ENCODE measurements at regions of chr15 and their contacts with region 1.

Region 1: GRCh38 chr15:50182219-50183013 is 420 bp downstream of the SLC27A2 start:
- DNase-seq: peak; percentile 65
- H3K4me3 Mint-ChIP-seq: peak overlapping the region; percentile 96
- H3K27ac Mint-ChIP-seq: peak overlapping the region; percentile 85
- H3K4me1 Mint-ChIP-seq: peaks cover 53% of the 10 kb centered on the region
- H3K27me3 Mint-ChIP-seq: no peaks in the 10 kb centered on the region

Region 2: GRCh38 chr15:50241684-50242450 is 59.5 kb after region 1 on chr15:
- CTCF ChIA-PET with region 1: no interaction called
- POLR2A ChIA-PET with region 1: interaction called, 28 read pairs
- DNase-seq: peak; percentile 23
- H3K4me3 Mint-ChIP-seq: no peak overlapping the region
- H3K27ac Mint-ChIP-seq: peak overlapping the region; percentile 47
- H3K4me1 Mint-ChIP-seq: peaks cover 27% of the 10 kb centered on the region
- H3K27me3 Mint-ChIP-seq: no peaks in the 10 kb centered on the region

Region 3: GRCh38 chr15:50247819-50248655 is 65.6 kb after region 1 on chr15:
- CTCF ChIA-PET with region 1: no interaction called
- POLR2A ChIA-PET with region 1: interaction called, 28 read pairs
- DNase-seq: peak; percentile 79
- H3K4me3 Mint-ChIP-seq: peak overlapping the region; percentile 66
- H3K27ac Mint-ChIP-seq: peak overlapping the region; percentile 90
- H3K4me1 Mint-ChIP-seq: peaks cover 51% of the 10 kb centered on the region
- H3K27me3 Mint-ChIP-seq: no peaks in the 10 kb centered on the region

Region 4: DNA sequence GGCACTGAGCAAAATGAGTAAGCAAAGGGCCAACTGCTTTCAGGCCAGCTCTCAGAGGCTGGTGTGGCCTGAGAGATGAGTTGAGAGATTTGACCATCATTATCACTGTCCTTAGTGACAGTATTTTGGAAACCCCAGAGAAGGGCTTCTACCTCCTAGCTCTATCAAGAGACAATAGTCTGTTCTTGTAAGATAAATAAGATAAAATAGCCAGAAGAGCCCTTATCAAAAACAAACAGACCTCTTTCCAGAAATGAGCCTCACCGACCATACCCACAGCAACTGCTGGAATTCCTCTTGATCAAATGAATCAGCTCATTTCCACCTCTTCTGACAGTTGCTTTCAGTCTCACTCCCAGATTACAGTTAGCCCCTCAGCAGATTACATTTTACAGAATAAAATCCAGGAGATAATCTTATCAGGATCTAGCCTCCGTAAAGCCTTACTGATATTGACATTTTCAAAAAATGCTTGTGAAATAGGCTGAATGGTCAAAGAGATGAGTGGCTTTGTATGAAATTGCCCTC is 78.6 kb after region 1 on chr15:
- CTCF ChIA-PET with region 1: interaction called, 6 read pairs
- POLR2A ChIA-PET with region 1: interaction called, 42 read pairs
- DNase-seq: no peak
- H3K4me3 Mint-ChIP-seq: peak overlapping the region; percentile 2
- H3K27ac Mint-ChIP-seq: peak overlapping the region; percentile 90
- H3K4me1 Mint-ChIP-seq: peaks cover 79% of the 10 kb centered on the region
- H3K27me3 Mint-ChIP-seq: no peaks in the 10 kb centered on the region

Region 5: GRCh38 chr15:50315814-50316630 is 133.6 kb after region 1 on chr15:
- CTCF ChIA-PET with region 1: interaction called, 46 read pairs
- POLR2A ChIA-PET with region 1: interaction called, 5 read pairs
- DNase-seq: no peak
- H3K4me3 Mint-ChIP-seq: no peak overlapping the region
- H3K27ac Mint-ChIP-seq: no peak overlapping the region
- H3K4me1 Mint-ChIP-seq: peaks cover 29% of the 10 kb centered on the region
- H3K27me3 Mint-ChIP-seq: no peaks in the 10 kb centered on the region

Measured in activated CD4-positive, alpha-beta memory T cell treated with anti-CD3 and anti-CD28 coated beads, Interleukin-2, amount 10 ng/mL, durations not matched to agents 7 days and 5 days (primary cell).